Activated B cell treated with CpG ODN at 0.5 μM for 24 hours (primary cell): ENCODE measurements at regions of chr3 and their contacts with region 1.

Region 1: GRCh38 chr3:186259612-186260383 is 102.2 kb downstream of the DGKG start:
- DNase-seq: peak; percentile 66
- ATAC-seq: peak; percentile 62
- H3K4me3 Mint-ChIP-seq: no peak overlapping the region
- H3K27ac Mint-ChIP-seq: peak overlapping the region; percentile 76
- H3K4me1 Mint-ChIP-seq: peaks cover 40% of the 10 kb centered on the region
- H3K27me3 Mint-ChIP-seq: no peaks in the 10 kb centered on the region
- CTCF ChIP-seq: peak; percentile 13

Region 2: GRCh38 chr3:186108941-186109865 is 150.6 kb before region 1 on chr3 and contains the start of gene ETV5:
- CTCF ChIA-PET with region 1: no interaction called
- POLR2A ChIA-PET with region 1: interaction called, 9 read pairs
- intact Hi-C with region 1: loop called (anchors 2 kb)
- DNase-seq: peak; percentile 85
- ATAC-seq: peak; percentile 95
- H3K4me3 Mint-ChIP-seq: peak within 1 kb of the TSS; percentile 95
- H3K27ac Mint-ChIP-seq: peak within 1 kb of the TSS; percentile 80
- H3K4me1 Mint-ChIP-seq: peaks cover 35% of the 10 kb centered on the region
- H3K27me3 Mint-ChIP-seq: peaks cover 42% of the 10 kb centered on the region
- CTCF ChIP-seq: no peak
- total RNA-seq, gene ETV5: 0.49 and 0.89 TPM in 2 replicates

Region 3: DNA sequence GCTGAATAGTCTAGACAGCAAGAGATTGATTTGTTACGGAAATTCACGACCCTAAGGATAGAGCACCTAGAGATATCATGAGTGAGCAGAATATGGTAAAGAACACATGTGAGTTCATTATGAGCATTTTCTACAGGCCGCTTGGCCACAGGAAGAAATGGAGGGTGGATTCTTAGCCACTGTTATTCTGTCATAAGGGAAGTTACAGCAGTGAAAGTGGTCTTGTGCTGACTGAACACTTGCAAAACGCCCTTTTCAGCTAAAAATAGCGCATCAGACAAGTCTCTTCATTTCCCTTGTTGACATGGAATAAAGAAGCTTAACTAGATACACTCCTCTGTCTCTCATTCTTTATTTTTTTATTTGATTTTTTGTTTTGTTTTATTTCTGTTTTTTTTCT is 82.4 kb after region 1 on chr3:
- CTCF ChIA-PET with region 1: interaction called, 3 read pairs
- POLR2A ChIA-PET with region 1: no interaction called
- intact Hi-C with region 1: loop called (anchors 5 kb)
- DNase-seq: no peak
- ATAC-seq: peak; percentile 66
- H3K4me3 Mint-ChIP-seq: no peak overlapping the region
- H3K27ac Mint-ChIP-seq: peak overlapping the region; percentile 72
- H3K4me1 Mint-ChIP-seq: peaks cover 54% of the 10 kb centered on the region
- H3K27me3 Mint-ChIP-seq: no peaks in the 10 kb centered on the region
- CTCF ChIP-seq: no peak

Region 4: DNA sequence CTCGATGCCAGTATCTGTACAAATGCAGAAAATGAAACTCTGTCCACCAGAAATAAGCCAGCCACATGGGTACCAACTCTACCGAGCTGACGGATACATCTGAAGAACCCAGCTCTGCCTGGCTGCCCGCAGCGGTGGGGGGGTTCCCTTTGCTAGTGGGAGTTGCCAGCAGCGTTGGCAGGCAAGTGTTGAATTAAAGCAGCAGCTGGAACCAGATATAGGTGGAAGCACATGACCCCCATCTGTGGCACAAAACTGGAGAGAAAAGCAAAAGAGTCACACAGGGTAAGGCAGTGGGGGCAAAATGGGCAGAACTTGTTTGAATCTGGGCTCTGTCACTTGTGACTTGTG is 266.4 kb after region 1 on chr3:
- CTCF ChIA-PET with region 1: interaction called, 9 read pairs
- POLR2A ChIA-PET with region 1: interaction called, 10 read pairs
- intact Hi-C with region 1: no loop called
- DNase-seq: peak; percentile 50
- ATAC-seq: peak; percentile 80
- H3K4me3 Mint-ChIP-seq: peak overlapping the region; percentile 55
- H3K27ac Mint-ChIP-seq: peak overlapping the region; percentile 86
- H3K4me1 Mint-ChIP-seq: peaks cover 85% of the 10 kb centered on the region
- H3K27me3 Mint-ChIP-seq: peaks cover 2% of the 10 kb centered on the region
- CTCF ChIP-seq: no peak

Region 5: DNA sequence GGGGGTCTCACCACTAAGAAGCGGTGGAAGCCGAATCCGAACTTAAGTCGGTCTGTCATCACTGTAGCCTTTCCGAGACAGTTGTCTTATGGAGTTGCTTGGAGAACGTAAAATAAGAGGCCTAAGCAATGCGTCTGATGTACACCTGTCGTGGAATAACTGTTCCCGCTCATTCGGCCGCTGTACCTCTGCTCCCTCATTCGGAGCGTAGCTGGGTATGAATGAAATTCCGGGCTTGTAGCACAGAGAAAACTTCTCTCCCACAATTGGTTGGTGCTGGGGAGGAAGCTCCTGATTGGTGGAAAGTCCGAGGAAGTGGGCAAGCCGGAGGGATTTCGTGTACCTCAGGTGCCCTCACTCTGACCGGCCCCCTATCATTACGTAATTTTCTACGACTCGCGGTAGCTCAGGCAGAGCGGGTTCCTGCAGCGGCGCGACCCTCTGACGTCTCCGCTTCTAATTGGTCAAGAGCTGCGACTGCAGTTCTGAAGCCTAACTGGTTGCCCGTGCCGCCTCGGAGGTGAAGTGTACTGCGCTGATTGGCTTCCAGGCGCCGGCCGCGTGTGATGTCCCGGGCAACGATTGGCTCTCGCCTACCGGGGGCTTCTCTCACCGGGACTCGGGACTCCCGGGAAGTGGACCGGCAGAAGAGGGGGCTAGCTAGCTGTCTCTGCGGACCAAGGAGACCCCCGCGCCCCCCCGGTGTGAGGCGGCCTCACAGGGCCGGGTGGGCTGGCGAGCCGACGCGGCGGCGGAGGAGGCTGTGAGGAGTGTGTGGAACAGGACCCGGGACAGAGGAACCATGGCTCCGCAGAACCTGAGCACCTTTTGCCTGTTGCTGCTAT is 310.5 kb after region 1 on chr3 and contains the start of gene DNAJB11:
- CTCF ChIA-PET with region 1: interaction called, 7 read pairs
- POLR2A ChIA-PET with region 1: interaction called, 11 read pairs
- intact Hi-C with region 1: loop called (anchors 1 kb)
- DNase-seq: peak; percentile 91
- ATAC-seq: peak; percentile 82
- H3K4me3 Mint-ChIP-seq: peak within 1 kb of the TSS; percentile 94
- H3K27ac Mint-ChIP-seq: peak within 1 kb of the TSS; percentile 97
- H3K4me1 Mint-ChIP-seq: peaks cover 56% of the 10 kb centered on the region
- H3K27me3 Mint-ChIP-seq: no peaks in the 10 kb centered on the region
- CTCF ChIP-seq: no peak
- total RNA-seq, gene DNAJB11: 51.3 and 52.5 TPM in 2 replicates